ENCODE measurements at regions of chrX and their contacts with region 1.

Region 1: GRCh38 chrX:111543212-111543762 is 31.8 kb downstream of the SERTM2 start:
- DNase-seq: no peak
- ATAC-seq: peak; percentile 93
- H3K4me3 Mint-ChIP-seq: peak overlapping the region; percentile 87
- H3K27ac Mint-ChIP-seq: peak overlapping the region; percentile 98
- H3K4me1 Mint-ChIP-seq: peaks cover 31% of the 10 kb centered on the region
- H3K27me3 Mint-ChIP-seq: no peaks in the 10 kb centered on the region; the same call in 1 of the 2 replicates
- CTCF ChIP-seq: no peak

Region 2: DNA sequence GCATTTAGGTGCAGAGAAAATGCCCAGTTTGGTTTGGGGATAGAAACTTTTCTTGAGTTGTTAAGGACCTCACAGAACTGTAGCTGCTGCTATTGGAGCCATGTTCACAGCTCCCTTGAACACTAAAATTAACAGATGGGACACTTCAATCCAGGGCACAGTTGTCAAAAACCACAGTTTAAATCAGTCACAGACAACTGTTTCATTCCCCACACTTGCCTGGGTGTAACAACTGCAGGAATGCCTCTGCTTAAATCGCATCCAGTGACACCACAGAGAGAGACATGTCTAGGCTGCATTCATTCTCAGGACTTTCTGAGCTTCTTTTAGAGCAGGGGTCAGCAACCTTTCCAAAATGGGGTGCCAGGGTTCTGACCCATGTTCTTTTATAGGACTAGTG is 260.3 kb before region 1 on chrX:
- CTCF ChIA-PET with region 1: no interaction called
- POLR2A ChIA-PET with region 1: interaction called, 10 read pairs
- DNase-seq: no peak
- ATAC-seq: no peak
- H3K4me3 Mint-ChIP-seq: no peak overlapping the region
- H3K27ac Mint-ChIP-seq: no peak overlapping the region
- H3K4me1 Mint-ChIP-seq: no peaks in the 10 kb centered on the region
- H3K27me3 Mint-ChIP-seq: peaks cover 8% of the 10 kb centered on the region
- CTCF ChIP-seq: no peak